Left cardiac atrium (tissue), 4 donors: ENCODE measurements at regions of chr2 and their contacts with region 1.

Region 1: GRCh38 chr2:38315707-38316333 is 61.3 kb downstream of the ATL2 start:
- DNase-seq: no peak
- ATAC-seq: peak; percentile 57 to 83

Region 2: DNA sequence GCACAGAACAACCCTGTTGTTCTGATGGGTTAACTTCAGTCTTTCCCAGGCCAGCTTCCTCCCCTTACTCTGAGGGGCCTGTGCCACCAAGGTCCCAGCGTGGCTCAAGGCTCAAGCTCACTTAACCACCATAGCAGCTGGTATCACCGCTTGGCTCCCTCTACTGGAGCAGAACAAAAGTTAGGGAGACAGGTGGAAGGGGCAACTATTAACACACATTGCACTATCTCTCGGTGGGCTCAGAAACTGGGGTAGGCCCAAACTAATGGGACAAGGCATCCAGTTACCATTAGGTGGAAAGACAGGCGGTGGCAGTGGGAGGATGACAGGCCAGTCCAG is 149.9 kb after region 1 on chr2:
- intact Hi-C with region 1: loop called in 1 of 2 experiments (anchors 10 kb)
- DNase-seq: no peak
- ATAC-seq: peak in 1 of 2 donors; percentile 42

Region 3: GRCh38 chr2:38508311-38509039 is 192.7 kb after region 1 on chr2:
- intact Hi-C with region 1: loop called in 1 of 2 experiments (anchors 5 kb)
- DNase-seq: peak; percentile 91
- ATAC-seq: peak; percentile 50 to 88

Region 4: GRCh38 chr2:38572167-38572566 is 256.3 kb after region 1 on chr2:
- intact Hi-C with region 1: loop called in 1 of 2 experiments (anchors 10 kb)
- DNase-seq: peak; percentile 46
- ATAC-seq: peak; percentile 38 to 73

Region 5: GRCh38 chr2:38734299-38735058 is 418.7 kb after region 1 on chr2:
- intact Hi-C with region 1: loop called in 1 of 2 experiments (anchors 10 kb)
- DNase-seq: peak; percentile 72
- ATAC-seq: peak in 1 of 2 donors; percentile 21

Region 6: DNA sequence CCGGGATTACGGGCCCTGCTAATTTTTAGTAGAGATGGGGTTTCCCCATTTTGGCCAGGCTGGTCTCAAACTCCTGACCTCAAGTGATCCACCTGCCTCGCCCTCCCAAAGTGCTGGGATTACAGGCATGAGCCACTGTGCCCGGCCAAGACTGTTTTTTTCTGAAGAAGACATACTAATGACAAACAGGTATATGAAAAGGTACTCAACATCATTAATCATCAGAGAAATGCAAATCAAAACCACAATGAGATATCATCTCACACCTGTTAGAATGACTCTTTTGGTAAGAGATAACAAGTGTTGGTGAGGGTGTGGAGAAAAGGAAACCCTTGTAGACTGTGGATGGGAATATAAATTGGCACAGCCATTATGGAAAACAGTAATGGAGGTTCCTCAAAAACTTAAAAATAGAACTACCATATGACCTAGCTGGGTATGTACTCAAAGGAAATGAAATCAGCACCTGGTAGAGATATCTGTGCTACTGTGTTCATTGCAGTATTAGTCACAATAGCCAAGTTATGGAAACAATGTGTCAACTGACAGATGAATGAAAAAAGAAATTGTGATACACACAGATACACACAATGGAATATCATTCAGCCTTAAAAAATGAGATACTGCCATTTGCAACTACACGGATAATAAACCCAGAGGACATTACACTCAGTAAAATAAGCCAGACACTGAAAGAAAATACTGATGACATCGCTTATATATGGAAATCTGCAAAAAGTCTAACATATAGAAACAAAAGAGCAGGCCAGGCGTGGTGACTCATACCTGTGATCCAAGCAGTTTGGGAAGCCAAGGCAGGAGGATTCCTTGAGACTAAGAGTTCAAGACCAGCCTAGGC is 784.3 kb after region 1 on chr2:
- intact Hi-C with region 1: no loop called
- DNase-seq: no peak
- ATAC-seq: no peak